RWPE1 (cell line): ENCODE measurements at regions of chr5 and their contacts with region 1.

Region 1: GRCh38 chr5:134041570-134042411 is 37.0 kb upstream of the VDAC1 start:
- DNase-seq: no peak
- H3K27ac ChIP-seq: no peak overlapping the region
- CTCF ChIP-seq: no peak

Region 2: DNA sequence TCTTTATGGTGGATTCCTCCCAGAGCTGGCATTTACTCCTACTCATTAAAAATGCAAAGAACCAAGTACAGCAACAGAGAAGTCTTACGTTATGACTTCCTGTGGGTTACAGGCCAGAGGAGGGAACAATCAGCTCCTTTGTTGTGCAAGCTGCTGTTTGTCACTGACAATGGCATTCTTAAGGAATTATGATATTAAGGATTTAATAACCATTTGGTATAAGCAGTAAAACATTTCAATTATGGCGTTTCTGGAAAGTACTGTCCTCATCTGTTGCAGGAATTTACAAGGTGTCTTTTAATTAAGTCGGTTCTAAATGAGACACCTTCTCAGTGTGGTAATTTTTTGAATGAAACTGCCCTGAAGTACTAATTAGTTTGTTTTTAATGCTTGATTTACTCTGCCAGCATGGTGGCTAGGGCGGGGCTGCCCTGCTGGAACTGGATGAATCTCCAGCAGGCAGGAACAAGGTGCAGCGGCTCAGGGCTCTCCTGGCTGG is 12.1 kb after region 1 on chr5:
- CTCF ChIA-PET with region 1: interaction called, 31 read pairs
- POLR2A ChIA-PET with region 1: no interaction called
- DNase-seq: no peak
- H3K27ac ChIP-seq: peak overlapping the region; percentile 34
- CTCF ChIP-seq: no peak

Region 3: DNA sequence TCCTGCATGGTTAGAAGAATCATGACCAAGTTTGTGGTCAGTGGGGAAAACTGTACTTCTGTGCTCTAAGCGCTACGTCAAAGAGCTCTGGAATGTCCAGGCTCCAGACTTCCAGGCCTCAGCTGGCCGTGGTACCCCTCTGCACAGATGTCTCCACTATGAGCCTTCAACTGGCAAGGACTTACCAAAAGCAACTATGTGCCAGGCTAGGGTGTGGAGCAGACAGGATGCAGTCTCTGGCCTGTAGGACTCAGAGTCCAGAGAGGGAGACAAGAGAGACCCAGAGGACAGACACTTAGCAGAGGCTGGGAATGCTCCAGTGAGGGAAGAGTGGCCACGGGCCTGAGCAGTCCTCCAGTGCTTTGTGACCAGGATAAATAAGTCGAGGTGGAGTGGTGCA is 41.7 kb after region 1 on chr5:
- CTCF ChIA-PET with region 1: interaction called, 18 read pairs
- POLR2A ChIA-PET with region 1: no interaction called
- DNase-seq: no peak
- H3K27ac ChIP-seq: no peak overlapping the region
- CTCF ChIP-seq: no peak

Region 4: DNA sequence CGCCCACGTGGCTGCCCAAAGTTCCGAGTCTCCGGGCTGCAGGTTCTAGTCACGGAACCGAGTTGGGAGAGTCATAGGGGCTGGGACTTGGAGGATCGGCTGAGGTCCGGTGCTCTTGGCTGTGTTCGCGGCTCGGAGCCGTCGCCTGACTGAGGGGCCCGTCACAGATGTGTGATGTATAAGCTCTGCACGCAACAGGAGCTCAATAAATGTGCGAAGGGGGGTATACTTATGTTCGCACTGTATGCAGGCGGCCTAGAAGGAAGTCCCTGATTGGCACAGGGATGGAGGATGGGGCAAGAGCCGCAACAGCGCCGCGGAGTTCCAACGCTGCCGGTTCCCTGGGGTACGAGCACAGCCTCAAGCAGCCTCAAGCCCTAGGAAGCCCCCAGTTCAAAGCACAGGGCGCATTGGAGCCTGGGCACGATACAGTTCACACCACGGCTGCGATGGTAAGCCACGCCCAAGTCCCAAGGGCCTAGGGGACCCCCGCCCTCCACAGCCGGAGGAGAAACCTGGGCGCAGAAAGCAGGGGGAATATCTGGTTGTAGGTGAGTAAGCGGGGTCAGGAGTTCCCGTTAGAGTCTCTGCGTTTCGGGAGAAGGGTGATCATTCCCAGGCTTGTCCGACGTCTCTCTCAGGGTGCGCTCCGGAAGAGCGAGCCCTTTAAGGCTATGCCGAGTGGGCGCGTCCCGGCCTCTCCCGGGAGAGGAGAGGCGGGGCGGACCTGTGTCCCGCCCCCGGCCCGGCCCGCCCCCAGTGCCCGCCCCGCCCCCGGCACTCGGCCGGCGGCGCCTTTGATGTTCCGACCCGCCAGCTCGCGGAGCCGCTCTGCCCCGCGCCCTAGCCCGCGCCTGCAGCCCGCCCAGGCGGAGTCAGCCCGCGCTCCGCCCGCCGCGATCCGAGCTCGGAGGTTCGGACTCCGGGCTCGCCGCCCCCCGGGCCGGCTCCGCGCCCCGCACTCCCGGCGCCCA is 72.4 kb after region 1 on chr5 and contains the start of gene TCF7:
- CTCF ChIA-PET with region 1: interaction called, 21 read pairs
- POLR2A ChIA-PET with region 1: no interaction called
- DNase-seq: peak; percentile 98
- H3K27ac ChIP-seq: peak within 1 kb of the TSS; percentile 53
- CTCF ChIP-seq: no peak

Region 5: DNA sequence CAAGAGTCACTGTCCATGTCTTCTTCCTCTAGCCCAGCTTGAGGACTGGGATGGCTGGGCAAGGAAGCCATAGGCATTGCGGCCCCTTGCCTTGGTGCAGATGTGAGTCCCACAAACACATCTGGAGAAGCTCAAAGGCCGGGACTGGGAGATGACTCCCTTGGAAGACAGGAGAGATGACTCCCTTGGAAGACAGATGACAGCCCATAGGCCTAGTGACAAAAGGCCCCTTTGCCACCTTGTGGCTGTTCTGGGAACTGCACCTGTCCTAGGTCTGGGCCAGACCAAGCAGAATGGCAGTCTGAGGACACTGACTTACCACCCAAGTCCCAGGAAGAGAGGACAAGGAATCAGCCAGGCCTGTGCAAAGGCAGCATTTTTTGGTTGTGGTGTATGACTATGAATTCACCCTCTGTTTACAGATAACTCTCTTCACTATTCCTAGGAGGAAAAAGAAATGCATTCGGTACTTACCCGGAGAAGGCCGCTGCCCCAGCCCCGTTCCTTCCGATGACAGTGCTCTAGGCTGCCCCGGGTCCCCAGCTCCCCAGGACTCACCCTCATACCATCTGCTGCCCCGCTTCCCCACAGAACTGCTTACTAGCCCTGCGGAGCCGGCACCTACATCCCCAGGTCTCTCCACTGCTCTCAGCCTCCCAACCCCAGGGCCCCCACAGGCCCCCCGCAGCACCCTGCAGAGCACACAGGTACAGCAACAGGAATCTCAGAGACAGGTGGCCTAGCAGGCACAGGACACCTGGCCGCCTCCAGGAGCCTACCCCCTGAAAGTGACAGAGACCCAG is 104.2 kb after region 1 on chr5:
- CTCF ChIA-PET with region 1: interaction called, 219 read pairs
- POLR2A ChIA-PET with region 1: no interaction called
- DNase-seq: peak; percentile 65
- H3K27ac ChIP-seq: peak overlapping the region; percentile 20
- CTCF ChIP-seq: peak; percentile 95